ENCODE measurements at regions of chr11 and their contacts with region 1.

Region 1: DNA sequence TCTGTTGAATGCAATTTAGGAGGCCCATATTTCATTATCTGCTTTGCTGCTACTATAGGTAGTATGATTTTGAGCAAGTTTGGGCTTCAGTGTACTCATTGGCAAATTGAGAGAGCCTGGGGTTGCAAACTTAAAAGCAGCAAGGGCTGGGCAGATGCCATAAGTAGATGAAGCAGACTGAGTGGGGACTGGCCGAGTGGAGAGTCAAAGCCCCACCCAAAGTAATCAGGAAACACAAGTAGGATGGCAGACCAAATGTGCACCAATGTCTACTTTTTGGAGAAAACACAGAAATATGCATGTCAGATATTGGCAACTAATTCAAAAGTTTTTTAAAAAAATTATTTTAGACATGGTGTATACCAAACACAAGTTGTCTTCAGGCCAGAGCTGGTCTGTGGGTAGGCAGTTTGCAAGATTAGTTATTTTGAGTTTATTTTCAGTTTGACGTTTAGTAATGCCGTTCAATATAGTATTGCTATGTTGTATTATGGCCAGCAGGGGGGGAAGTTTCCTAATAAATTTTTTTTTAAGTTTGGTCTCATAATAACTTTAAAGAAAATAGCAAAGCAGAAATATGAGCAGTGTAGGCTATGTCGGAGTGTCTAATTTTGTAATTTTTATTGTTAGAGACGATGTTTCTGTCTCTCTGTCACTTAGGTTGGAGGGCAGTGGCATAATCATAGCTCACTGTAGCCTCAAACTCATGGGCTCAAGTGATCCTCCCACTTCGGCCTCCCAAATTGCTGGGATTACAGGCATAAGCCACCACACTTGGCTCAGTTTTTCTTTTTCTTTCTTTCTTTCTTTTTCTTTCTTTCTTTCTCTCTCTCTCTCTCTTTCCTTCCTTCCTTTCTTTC is 105.1 kb downstream of the HIPK3 start:
- DNase-seq: peak in 2 of 4 donors; percentile 37 to 55
- ATAC-seq: peak; percentile 79
- H3K4me3 ChIP-seq: no peak overlapping the region
- H3K27ac ChIP-seq: no peak overlapping the region
- H3K4me1 ChIP-seq: no peaks in the 10 kb centered on the region
- H3K27me3 ChIP-seq: peaks cover 0 to 3% of the 10 kb centered on the region in 2 donors
- CTCF ChIP-seq: peak; percentile 59 to 66

Region 2: GRCh38 chr11:33742249-33742851 is 380.1 kb after region 1 on chr11:
- intact Hi-C with region 1: loop called in 1 of 2 experiments (anchors 5 kb)
- DNase-seq: peak in 1 of 4 donors; percentile 29
- ATAC-seq: peak; percentile 70
- H3K4me3 ChIP-seq: no peak overlapping the region
- H3K27ac ChIP-seq: no peak overlapping the region
- H3K4me1 ChIP-seq: no peaks in the 10 kb centered on the region
- H3K27me3 ChIP-seq: no peaks in the 10 kb centered on the region
- CTCF ChIP-seq: peak; percentile 48 to 50

Measured in left lung (tissue), 14 donors.